Endothelial cell of umbilical vein (primary cell): ENCODE measurements at regions of chr3 and their contacts with region 1.

Region 1: DNA sequence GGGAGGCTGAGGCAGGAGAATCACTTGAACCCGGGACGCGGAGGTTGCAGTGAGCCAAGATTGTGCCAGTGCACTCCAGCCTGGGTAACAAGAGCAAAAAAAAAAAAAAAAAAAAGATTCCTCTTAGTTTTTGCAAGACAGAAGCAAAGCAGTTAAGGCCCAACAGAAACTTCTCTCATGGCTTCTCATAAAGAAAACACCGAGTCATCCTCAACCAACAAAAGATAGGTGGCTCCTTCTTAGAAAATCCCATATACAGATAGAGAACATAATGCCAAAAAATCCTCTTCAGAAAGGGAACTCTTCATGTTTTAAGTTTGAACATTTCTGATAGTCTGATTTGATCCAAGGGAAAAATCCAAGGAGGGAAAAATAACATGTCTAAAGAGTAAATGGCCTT is 12.5 kb upstream of the SKIL start:
- DNase-seq: peak; percentile 31
- H3K4me3 ChIP-seq: no peak overlapping the region
- H3K27ac ChIP-seq: peak overlapping the region; percentile 72
- H3K4me1 ChIP-seq: peaks cover 13% of the 10 kb centered on the region
- H3K27me3 ChIP-seq: no peaks in the 10 kb centered on the region
- CTCF ChIP-seq: no peak
- POLR2A ChIP-seq: no peak

Region 2: DNA sequence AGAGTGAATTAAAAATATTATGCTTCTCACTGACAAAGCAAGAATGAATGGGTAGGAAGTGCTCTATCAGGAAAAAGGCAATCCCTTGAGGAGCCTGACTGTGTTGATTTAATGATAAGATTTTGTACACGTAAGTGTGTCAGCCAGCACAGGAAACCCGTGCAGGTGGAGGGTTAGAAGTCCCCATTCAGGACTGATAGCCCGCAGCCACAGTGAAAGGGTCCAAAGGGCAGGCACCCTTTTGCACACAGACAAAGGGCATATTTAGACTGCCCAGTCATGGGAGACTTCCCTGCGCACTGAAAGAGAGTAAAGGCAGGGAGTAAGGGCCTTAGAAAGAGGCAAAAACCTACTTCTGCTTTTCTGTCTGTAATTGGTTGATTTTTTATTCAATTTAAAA is 13.8 kb before region 1 on chr3:
- CTCF ChIA-PET with region 1: interaction called, 7 read pairs
- POLR2A ChIA-PET with region 1: no interaction called
- dilution Hi-C with region 1: no loop called
- intact Hi-C with region 1: loop called (anchors 1 kb)
- DNase-seq: peak; percentile 93
- H3K4me3 ChIP-seq: no peak overlapping the region
- H3K27ac ChIP-seq: peak overlapping the region; percentile 84
- H3K4me1 ChIP-seq: peaks cover 13% of the 10 kb centered on the region
- H3K27me3 ChIP-seq: no peaks in the 10 kb centered on the region
- CTCF ChIP-seq: no peak
- POLR2A ChIP-seq: peak; percentile 13